ENCODE measurements at regions of chr3 and their contacts with region 1.

Region 1: DNA sequence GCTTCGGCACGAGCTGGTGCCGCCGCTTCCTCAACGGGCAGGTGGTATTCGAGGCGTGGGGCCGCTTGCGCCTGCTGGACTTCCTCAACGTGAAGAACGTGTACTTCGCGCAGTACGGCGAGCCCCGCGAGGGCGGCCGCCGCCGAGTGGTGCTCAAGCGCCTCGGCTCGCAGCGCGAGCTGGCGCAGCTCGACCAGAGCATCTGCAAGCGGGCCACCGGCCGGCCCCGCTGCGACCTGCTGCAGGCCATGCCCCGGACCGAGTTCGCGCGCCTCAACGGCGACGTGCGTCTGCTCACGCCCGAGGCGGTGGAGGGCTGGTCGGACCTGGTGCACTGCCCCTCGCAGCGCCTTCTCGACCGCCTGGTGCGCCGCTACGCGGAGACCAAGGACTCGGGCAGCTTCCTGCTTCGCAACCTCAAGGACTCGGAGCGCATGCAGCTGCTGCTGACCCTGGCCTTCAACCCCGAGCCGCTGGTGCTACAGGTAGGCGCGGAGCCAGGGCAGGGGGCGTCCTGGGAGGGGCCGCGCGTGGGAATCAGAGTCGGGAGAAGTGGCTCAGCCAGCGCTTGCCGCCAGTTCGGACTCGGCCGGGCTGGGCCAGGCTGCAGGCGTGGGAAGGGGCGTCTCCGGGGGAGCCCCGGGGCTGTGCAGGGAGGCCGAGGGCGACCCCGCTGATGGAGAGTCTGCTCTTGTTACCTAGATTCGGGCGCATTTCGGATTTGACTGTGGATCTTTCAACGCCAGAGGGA is 1.1 kb downstream of the DIPK2A start:
- DNase-seq: peak; percentile 62
- CTCF ChIP-seq: peak; percentile 49

Region 2: GRCh38 chr3:143895805-143896204 is 76.9 kb before region 1 on chr3:
- CTCF ChIA-PET with region 1: interaction called, 12 read pairs
- POLR2A ChIA-PET with region 1: interaction called, 5 read pairs
- DNase-seq: peak; percentile 28
- CTCF ChIP-seq: no peak

Region 3: DNA sequence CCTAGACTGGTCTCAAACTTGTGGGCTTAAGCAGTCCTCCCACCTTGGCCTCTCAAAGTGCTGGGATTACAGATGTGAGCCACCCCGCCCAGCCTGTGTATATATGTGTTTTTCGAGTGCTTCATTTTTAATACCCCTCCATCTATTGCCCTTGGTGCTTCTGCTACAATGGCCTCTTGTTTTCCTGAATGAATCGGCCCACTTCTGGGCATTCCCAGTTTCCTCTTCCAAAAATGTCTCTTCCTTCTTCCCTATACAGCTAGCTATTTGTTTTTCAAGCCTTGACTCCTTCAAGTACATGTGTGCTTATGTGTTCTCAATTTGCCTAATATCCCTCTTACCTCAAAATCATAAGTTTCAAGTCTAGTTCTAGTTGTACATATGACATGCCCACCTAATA is 15.6 kb after region 1 on chr3:
- CTCF ChIA-PET with region 1: interaction called, 25 read pairs
- POLR2A ChIA-PET with region 1: interaction called, 5 read pairs
- DNase-seq: no peak
- CTCF ChIP-seq: no peak

Measured in GM10248 (cell line).